Mammary epithelial cell (primary cell): ENCODE measurements at regions of chr5 and their contacts with region 1.

Region 1: DNA sequence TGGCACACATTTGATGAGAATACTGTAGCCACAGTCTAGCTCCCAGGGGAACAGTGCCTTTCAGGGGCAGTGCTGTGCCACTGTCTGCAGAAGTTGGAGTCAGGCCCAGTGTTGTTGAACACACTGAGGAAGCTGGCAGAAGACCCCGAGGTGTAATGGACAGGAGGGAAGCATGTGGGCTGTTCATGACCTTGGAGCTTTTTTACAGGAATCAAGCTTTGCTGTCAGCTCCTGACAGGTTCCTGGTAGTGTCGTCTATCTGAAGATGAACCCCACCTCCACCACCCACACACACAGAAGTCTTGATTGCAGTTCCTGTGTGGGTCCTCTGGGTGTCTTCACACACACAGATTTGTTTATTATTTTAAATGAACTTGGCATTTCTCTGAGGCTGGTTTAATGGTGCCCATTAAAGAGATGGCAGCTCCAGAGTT is 40.3 kb upstream of the TNFAIP8 start:
- DNase-seq: peak; percentile 50
- H3K4me3 ChIP-seq: no peak overlapping the region
- H3K27ac ChIP-seq: peak overlapping the region; percentile 3
- H3K4me1 ChIP-seq: peaks cover 14% of the 10 kb centered on the region
- H3K27me3 ChIP-seq: no peaks in the 10 kb centered on the region
- CTCF ChIP-seq: peak; percentile 47 to 63

Region 2: GRCh38 chr5:119048246-119048645 is 267.3 kb before region 1 on chr5:
- CTCF ChIA-PET with region 1: interaction called, 10 read pairs
- dilution Hi-C with region 1: no loop called
- in situ Hi-C with region 1: no loop called
- intact Hi-C with region 1: no loop called
- DNase-seq: no peak
- H3K4me3 ChIP-seq: no peak overlapping the region
- H3K27ac ChIP-seq: no peak overlapping the region
- H3K4me1 ChIP-seq: peaks cover 5% of the 10 kb centered on the region
- H3K27me3 ChIP-seq: no peaks in the 10 kb centered on the region
- CTCF ChIP-seq: no peak

Region 3: DNA sequence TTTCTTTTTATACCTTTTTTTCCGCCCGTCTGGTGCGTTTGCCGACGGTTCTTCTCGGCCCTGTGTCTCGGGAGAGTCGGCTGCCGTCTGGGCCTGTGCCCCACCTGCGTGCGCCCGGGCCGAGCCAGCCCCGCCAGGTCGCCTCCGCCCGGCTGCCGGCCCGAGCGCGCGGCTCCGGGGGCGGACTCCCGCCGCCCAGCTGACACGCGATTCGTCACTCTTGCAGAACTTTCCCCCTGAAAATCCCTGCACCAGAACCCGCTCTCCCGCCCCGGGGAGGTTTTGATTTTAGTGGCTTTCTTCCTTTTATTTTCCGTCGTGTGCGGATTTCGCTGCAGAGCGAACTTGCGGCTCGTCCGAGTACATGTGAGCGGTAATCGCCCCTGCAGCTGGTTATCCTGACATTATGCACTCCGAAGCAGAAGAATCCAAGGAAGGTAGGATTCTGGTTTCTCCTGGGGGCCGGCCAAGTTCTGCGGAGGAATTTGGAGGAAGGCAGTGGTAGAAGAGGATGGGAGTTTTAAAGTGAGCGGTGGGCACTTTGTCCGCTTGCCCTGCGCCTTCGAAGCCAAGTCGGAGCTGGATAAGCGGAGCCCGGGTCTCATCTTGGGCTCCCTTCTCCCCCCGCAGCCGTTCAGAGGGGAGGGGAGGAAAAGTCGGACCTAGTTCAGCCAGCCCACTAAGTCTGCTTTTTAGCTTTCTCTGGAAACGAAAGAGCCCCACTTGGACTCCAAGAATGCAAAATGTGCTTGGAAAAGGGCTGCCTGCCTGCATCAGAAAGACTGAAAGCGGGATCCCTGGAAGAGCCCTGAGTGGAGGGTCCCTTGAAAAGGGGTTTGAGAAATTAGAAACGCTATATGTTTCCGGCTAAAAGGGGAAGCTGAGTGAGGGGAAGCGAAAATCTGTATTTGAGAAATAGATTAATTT is 40.4 kb after region 1 on chr5 and contains the start of gene TNFAIP8:
- CTCF ChIA-PET with region 1: no interaction called
- dilution Hi-C with region 1: no loop called
- in situ Hi-C with region 1: no loop called
- intact Hi-C with region 1: loop called (anchors 1 kb)
- DNase-seq: peak; percentile 76
- H3K4me3 ChIP-seq: peak within 1 kb of the TSS; percentile 69 to 77 (median 71)
- H3K27ac ChIP-seq: peak within 1 kb of the TSS; percentile 77
- H3K4me1 ChIP-seq: peaks cover 40% of the 10 kb centered on the region
- H3K27me3 ChIP-seq: no peaks in the 10 kb centered on the region
- CTCF ChIP-seq: no peak
- total RNA-seq, gene TNFAIP8: 11.3 to 15.9 TPM

Region 4: DNA sequence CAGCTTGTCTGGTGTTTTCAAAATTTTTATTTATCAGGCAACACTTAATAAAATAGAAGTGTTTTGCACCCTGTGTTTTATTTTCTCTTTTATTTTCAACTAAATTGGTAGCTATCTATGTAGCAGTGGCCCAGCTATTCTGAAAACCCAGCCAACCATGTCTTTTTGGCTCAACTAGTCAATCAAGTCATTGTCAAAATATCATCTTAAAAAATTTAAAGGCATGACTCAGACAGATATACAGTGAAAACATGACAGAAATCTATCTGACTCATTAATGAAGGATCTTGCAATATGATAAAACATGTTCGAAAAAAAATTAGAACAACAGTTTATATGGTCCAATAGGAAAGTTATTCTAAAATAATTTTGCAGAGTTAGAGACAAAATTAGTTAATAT is 211.8 kb after region 1 on chr5:
- CTCF ChIA-PET with region 1: no interaction called
- dilution Hi-C with region 1: no loop called
- in situ Hi-C with region 1: no loop called
- intact Hi-C with region 1: no loop called
- DNase-seq: peak; percentile 31
- H3K4me3 ChIP-seq: no peak overlapping the region
- H3K27ac ChIP-seq: no peak overlapping the region
- H3K4me1 ChIP-seq: peaks cover 9% of the 10 kb centered on the region
- H3K27me3 ChIP-seq: no peaks in the 10 kb centered on the region
- CTCF ChIP-seq: no peak